ENCODE measurements at regions of chr15 and their contacts with region 1.

Region 1: DNA sequence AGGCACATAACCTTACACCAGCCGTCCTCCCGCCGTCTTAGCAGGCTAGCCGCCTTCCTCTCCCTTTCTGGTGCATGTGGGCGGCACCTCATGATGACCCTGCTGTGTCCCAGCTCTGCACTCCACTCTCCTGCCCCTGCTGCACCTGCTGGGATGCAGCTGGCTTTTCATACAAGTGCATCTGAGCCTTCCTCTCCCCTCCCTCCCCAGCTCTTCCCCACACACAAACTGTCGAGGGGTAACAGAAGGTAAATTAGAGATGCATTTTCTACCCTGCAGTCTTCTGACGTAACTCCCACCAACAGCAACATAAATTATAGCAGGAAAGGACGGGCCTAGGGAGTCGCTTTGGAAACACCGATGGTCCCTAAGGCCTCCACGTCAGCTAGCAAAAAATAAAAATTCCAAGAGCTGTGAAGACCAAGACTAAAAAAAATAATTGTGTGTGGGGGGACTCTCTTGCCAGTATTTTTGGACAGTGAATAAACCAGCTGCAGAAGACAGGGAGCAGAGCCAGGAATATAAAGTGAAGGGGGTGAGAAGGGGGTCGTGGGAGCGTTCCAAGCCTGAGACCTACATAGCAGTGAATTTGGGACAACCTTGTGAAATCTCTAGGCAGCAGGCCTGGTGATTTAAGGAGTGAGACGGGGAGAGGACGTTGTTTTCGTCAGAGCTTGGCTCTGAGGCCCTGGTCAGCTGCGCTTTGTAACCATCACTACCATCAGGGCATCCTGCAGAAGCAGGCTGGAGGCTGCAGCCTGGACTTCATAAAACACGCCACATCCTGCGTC is 216.2 kb downstream of the ADAMTS17 start:
- DNase-seq: peak; percentile 89 to 93
- H3K4me3 ChIP-seq: no peak overlapping the region
- H3K27ac ChIP-seq: peak overlapping the region; percentile 69 to 85
- H3K4me1 ChIP-seq: peaks cover 0 to 16% (median 7%) of the 10 kb centered on the region in 4 donors
- H3K27me3 ChIP-seq: no peaks in the 10 kb centered on the region
- CTCF ChIP-seq: no peak

Region 2: DNA sequence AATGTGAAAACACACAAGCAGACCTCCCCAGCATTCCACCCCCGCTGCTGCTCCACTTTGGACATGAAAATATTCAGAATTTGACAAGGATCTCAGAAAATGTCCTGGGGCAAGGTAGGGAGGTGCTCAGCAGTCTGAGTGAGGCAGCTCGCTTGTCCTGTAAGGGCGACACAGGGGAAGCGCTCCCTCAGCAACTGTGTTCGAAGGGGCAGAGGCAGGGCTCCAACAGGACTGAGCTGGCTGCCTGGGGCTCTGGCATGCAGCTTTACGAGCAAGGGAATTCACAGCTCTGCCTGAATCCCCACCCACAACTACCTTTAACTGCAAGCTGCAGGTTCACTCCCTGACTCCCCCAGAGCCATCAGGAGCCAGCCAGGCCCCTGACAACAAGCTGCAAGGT is 105.4 kb before region 1 on chr15:
- intact Hi-C with region 1: loop called (anchors 10 kb)
- DNase-seq: no peak
- H3K4me3 ChIP-seq: no peak overlapping the region
- H3K27ac ChIP-seq: no peak overlapping the region
- H3K4me1 ChIP-seq: peaks cover 0 to 34% (median 4%) of the 10 kb centered on the region in 4 donors
- H3K27me3 ChIP-seq: no peaks in the 10 kb centered on the region
- CTCF ChIP-seq: no peak

Region 3: DNA sequence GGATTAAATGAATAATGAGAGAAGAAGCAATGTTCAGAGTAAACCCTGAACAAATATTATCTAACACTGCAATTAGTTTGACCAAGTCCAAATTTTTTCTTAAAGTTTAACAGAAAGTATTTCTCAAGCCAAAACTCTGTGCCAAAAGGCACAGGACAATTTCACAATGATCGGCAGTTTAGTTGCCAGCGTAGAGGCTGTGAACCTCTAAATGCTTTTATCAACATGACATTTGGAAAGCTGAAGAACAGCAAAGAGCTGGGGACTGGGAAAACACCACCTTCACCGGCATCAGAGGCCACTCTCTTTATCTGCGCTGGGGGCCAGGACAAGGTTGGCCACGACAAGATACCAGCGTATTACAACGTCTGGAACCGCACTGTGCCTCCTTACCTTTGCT is 90.6 kb after region 1 on chr15:
- intact Hi-C with region 1: loop called (anchors 5 kb)
- DNase-seq: peak; percentile 62 to 79
- H3K4me3 ChIP-seq: no peak overlapping the region
- H3K27ac ChIP-seq: peak overlapping the region; percentile 48 to 62
- H3K4me1 ChIP-seq: peaks cover 0 to 28% (median 20%) of the 10 kb centered on the region in 4 donors
- H3K27me3 ChIP-seq: no peaks in the 10 kb centered on the region
- CTCF ChIP-seq: no peak

Measured in tibial artery (tissue), 4 donors.